WTC11 (cell line): ENCODE measurements at regions of chr12 and their contacts with region 1.

Region 1: GRCh38 chr12:57088459-57089248 is at the start of gene NAB2:
- DNase-seq: peak; percentile 91
- ATAC-seq: peak; percentile 46
- H3K4me3 Mint-ChIP-seq: peak within 1 kb of the TSS; percentile 88
- H3K27ac Mint-ChIP-seq: peak within 1 kb of the TSS; percentile 100
- H3K4me1 Mint-ChIP-seq: peaks cover 40% of the 10 kb centered on the region
- H3K27me3 Mint-ChIP-seq: no peaks in the 10 kb centered on the region; the same call in 1 of the 2 replicates
- CTCF ChIP-seq: no peak
- total RNA-seq, gene NAB2: 16.5 to 20.5 TPM (median 17.2 TPM) in 3 replicates

Region 2: GRCh38 chr12:57069523-57069922 is 19.1 kb before region 1 on chr12:
- CTCF ChIA-PET with region 1: interaction called, 62 read pairs
- POLR2A ChIA-PET with region 1: interaction called, 7 read pairs
- DNase-seq: peak; percentile 50
- ATAC-seq: peak; percentile 99
- H3K4me3 Mint-ChIP-seq: no peak overlapping the region
- H3K27ac Mint-ChIP-seq: peak overlapping the region; percentile 34
- H3K4me1 Mint-ChIP-seq: no peaks in the 10 kb centered on the region
- H3K27me3 Mint-ChIP-seq: no peaks in the 10 kb centered on the region
- CTCF ChIP-seq: peak; percentile 64

Region 3: GRCh38 chr12:57101844-57102695 is 13.4 kb after region 1 on chr12:
- CTCF ChIA-PET with region 1: interaction called, 14 read pairs
- POLR2A ChIA-PET with region 1: interaction called, 5 read pairs
- DNase-seq: no peak
- ATAC-seq: no peak
- H3K4me3 Mint-ChIP-seq: no peak overlapping the region
- H3K27ac Mint-ChIP-seq: no peak overlapping the region
- H3K4me1 Mint-ChIP-seq: no peaks in the 10 kb centered on the region
- H3K27me3 Mint-ChIP-seq: no peaks in the 10 kb centered on the region
- CTCF ChIP-seq: no peak